ENCODE measurements at regions of chr18 and their contacts with region 1.

Region 1: GRCh38 chr18:48663931-48664847 is 125.4 kb downstream of the CTIF start:
- DNase-seq: peak; percentile 86

Region 2: GRCh38 chr18:48030616-48031480 is 633.3 kb before region 1 on chr18:
- intact Hi-C with region 1: loop called (anchors 10 kb)
- DNase-seq: peak; percentile 57

Region 3: DNA sequence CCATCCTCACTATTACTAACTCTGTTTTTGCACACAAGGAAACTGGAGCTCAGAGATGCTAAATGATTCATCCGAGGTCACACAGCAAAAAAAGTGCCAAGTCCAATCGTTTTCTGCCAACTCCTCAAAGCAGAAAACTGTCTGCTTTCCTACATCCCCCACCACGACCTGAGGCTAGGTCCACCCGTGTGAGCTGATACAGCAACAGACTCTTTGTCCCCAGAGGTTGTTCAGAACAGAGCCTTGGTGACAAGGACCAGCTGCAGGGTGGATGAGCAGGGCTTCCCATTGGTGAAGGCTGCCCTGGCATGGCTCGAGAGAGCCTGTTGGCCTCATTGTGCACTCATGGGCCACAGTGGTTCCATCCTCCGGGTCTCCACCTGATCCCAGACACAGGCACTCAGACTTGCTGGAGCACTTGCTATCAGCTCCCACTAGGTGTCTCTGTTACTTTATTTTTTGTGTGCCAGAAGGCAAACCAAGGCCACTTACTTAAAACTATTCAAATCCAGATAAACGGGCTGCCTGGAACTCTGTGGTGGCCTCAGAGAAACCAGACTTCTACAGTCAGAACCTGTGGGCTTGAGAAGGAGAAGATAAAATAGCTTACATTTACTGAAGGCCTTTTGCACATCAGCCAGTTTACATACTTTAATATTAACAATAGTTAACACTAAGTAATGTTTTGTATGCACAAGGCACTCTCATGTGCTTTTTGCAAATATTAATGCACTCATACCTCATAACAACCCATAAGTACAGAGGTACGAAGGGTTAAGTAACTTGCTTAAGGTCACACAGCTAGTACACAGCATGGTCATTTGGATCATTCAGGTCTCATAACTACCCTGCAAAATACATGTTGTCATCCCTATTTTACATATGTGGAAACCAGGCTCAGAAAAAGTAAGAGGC is 188.3 kb before region 1 on chr18:
- intact Hi-C with region 1: loop called (anchors 1 kb)
- DNase-seq: no peak

Region 4: DNA sequence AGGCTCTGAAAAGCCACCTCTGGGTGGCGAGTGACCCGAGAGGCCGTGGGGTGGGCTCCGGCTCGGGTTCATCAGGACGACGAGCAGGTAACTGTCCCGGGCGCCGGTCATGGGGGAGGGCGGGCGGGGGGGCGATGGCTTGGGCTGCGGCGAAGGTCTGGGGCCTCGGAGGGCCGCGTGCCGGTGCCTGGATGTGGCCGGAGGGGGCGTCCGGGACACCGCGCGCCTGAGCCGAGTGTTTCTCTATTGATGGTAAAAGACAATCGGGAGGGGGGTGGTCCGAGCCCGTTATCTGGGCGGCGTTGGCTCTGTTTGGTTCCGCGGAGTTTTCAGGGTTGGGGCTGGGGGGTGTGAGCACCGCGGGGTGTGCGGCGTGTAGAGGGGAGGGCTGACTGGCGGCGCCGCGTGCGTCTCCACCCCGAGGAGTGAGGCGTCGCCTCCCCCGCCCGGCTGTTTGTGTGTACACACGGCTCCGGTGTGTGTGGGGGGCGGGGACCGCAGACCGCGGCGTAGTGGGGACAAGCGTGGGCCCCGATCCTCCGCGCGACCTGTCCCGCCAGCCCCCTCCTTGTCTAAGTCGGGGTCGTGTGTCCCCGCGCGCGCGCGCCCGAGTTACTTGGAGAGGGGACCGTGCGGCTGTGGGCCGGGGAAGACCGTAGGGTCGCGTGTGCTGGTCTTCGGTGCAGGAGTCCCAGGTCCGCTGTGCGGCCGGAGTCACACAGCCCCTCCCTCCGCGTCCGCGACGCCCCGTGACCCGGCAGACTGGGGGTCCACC is 123.8 kb before region 1 on chr18:
- intact Hi-C with region 1: loop called (anchors 5 kb)
- DNase-seq: peak; percentile 92